ENCODE measurements at regions of chr20 and their contacts with region 1.

Region 1: GRCh38 chr20:13261460-13262301 is 40.6 kb downstream of the ISM1 start:
- DNase-seq: peak; percentile 74
- H3K4me3 Mint-ChIP-seq: no peak overlapping the region
- H3K27ac Mint-ChIP-seq: no peak overlapping the region
- H3K4me1 Mint-ChIP-seq: peaks cover 10% of the 10 kb centered on the region
- H3K27me3 Mint-ChIP-seq: no peaks in the 10 kb centered on the region

Region 2: GRCh38 chr20:13119583-13119982 is 142.1 kb before region 1 on chr20:
- CTCF ChIA-PET with region 1: interaction called, 56 read pairs
- POLR2A ChIA-PET with region 1: no interaction called
- intact Hi-C with region 1: loop called (anchors 1 kb)
- DNase-seq: peak; percentile 39
- H3K4me3 Mint-ChIP-seq: no peak overlapping the region
- H3K27ac Mint-ChIP-seq: no peak overlapping the region
- H3K4me1 Mint-ChIP-seq: no peaks in the 10 kb centered on the region
- H3K27me3 Mint-ChIP-seq: peaks cover 1% of the 10 kb centered on the region

Region 3: DNA sequence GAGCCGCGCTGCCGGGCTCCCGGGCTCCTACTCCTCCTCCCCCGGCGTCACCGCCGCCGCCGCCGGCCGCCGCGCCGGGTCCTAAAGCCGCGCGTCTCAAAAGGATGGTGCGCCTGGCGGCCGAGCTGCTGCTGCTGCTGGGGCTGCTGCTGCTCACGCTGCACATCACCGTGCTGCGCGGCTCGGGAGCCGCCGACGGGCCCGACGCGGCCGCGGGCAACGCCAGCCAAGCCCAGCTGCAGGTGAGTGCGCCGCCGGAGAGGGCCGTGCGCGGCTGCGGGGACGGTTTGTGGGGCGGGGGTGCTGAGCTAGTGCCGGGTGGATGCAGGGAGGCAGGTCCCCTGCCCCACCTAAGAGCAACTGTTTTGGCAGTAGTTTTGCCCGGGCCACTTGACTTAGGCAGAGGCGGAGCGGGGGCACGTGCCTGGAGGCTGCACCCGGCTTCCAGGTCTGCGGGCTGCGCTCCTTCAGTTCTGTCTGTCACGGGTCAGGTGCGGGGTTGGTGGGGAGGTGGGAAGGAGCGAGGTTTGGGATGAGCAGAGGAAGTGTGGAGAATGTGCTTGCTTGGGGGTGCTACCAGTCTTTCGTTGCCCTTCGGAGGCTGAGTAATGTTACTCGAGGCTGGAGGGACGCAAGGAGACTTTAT is 39.9 kb before region 1 on chr20:
- CTCF ChIA-PET with region 1: interaction called, 5 read pairs
- POLR2A ChIA-PET with region 1: no interaction called
- intact Hi-C with region 1: loop called (anchors 5 kb)
- DNase-seq: peak; percentile 76
- H3K4me3 Mint-ChIP-seq: peak overlapping the region; percentile 69
- H3K27ac Mint-ChIP-seq: no peak overlapping the region
- H3K4me1 Mint-ChIP-seq: peaks cover 15% of the 10 kb centered on the region
- H3K27me3 Mint-ChIP-seq: peaks cover 38% of the 10 kb centered on the region

Region 4: GRCh38 chr20:13251106-13251903 is 10.4 kb before region 1 on chr20:
- CTCF ChIA-PET with region 1: interaction called, 16 read pairs
- POLR2A ChIA-PET with region 1: no interaction called
- intact Hi-C with region 1: no loop called
- DNase-seq: no peak
- H3K4me3 Mint-ChIP-seq: no peak overlapping the region
- H3K27ac Mint-ChIP-seq: no peak overlapping the region
- H3K4me1 Mint-ChIP-seq: peaks cover 38% of the 10 kb centered on the region
- H3K27me3 Mint-ChIP-seq: no peaks in the 10 kb centered on the region

Measured in activated CD4-positive, alpha-beta memory T cell treated with anti-CD3 and anti-CD28 coated beads for 36 hours (primary cell).